ENCODE measurements at regions of chr1 and their contacts with region 1.

Region 1: DNA sequence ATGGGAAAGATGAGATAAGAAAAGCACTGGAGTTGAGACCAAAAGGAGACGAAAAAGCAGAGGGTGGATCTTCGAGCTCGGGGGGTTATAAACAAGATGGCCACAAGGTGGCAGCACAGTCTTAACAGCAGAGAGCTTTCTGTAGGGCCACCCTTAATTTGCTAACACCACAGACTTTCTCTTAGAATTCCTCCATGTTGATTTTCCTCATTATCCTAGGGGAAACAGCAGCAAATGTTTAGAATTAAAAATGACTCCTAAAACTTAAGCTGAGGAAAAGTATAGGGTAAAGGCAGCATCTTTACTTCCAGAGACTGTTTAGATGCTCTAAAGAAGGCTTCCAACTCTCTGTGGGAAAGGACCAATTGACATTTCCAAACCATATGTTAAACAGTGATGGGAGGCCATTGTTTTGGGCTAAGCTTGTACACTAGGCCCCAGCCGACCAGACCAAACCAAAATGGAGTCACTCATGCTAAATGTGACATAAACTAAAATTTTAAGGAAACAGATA is 2.5 kb upstream of the APOBEC4 start:
- DNase-seq: peak; percentile 75
- CTCF ChIP-seq: peak; percentile 82

Region 2: GRCh38 chr1:183030053-183030452 is 625.6 kb before region 1 on chr1:
- in situ Hi-C with region 1: no loop called
- DNase-seq: no peak
- CTCF ChIP-seq: no peak

Region 3: DNA sequence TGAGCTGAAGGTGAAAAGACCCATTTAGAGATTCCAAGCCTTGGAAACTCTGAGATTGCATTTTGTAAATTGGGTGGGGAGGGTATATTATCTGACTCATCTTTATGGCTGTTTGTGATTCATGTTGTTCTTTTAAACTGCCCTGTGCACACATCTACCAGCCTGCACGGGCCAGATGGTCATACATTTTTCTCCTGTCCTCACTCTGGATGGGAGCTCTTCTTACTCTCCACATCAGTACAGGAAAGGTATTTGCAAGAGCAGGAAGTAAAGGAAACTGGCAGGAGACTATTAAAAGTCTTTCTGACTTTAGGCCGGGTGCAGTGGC is 223.1 kb before region 1 on chr1:
- in situ Hi-C with region 1: no loop called
- DNase-seq: no peak
- CTCF ChIP-seq: no peak

Region 4: DNA sequence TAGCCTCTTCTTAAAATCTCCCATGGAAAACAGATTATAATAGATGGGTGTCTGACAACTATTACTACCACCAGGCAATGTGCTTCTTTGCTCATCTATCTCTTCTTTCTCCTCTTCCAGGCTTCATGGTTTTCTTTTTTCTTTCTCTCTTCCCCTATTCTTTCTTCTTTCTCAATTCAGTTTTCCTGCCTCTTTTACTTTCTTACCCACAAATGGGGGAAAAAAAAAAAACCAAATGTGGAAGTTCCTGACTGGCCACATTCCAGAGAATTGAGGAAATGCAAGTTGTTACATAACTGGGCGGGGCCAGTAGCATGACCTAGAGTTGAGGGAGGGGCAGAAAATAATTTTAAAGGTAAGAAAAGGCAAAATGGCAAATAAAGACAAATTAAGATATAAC is 194.3 kb before region 1 on chr1:
- in situ Hi-C with region 1: no loop called
- DNase-seq: no peak
- CTCF ChIP-seq: no peak

Region 5: DNA sequence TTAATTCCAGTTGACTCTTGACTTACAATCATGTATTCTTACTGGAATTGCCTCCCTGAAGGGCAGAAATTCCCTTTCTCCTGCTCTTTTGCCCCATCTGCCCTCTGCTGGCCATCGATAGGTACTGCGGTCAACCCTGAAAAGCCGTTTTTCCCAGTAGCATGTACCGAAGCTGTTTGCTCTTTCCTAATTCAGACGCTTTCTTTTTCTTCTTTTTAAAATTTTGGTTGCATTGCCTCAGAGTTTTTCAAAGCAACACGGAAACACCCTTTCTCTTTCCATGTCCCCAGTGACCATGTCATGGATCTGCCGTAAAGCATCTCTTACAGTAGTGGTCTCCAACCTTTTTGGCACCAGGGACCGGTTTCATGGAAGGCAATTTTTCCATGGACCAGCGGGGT is 567.0 kb after region 1 on chr1:
- in situ Hi-C with region 1: loop called (anchors 25 kb)
- DNase-seq: peak; percentile 69
- CTCF ChIP-seq: peak; percentile 93